ENCODE measurements at regions of chr12 and their contacts with region 1.

Region 1: DNA sequence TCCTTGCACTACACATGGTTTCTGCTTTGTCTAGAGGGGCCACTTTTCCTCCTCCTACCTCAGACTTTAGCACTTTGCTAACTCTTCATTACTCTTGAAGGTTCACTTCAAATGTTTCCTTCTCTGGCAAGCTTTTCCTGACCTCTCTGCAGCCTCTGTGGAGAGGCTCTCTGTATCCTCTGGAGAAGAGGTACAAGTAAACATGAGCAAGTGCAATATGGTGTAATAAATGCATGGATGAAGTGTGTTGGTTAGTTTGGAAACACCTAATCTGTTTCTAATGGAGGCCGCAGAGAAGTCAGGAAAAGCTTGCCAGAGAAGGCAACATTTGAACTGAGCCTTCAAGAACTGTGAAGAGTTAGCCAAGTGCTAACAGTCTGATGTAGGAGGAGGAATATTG is 329.3 kb downstream of the GRIN2B start:
- DNase-seq: no peak
- ATAC-seq: no peak

Region 2: DNA sequence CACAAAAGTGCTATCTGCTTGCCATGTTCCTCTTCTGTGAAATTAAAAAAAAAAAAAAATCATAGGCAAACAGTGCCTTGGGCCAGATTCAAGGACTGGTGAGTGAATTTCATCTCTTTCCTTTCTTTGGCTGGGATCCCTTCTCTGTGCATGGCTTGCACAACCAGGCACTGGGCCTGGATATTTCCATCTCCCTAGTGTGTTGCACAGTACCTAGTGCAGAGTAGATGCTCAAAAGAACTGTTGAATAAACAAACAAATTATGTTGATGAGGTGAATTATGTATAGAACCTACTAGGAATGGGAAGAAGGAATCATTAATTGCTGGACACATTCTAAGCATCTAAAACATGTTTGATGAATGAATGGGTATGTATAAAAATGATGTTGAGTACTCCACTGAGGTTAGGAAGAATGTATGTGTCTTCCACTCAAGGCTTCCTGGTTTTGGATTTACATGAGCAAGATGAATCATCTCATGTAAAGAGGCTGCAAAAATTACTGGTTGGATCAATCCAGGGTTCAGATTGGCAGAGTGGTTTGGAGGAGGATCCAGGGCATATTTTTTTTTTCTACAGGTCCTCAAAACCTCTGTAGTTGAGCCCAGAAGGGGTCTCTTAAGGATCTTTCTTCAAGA is 362.3 kb before region 1 on chr12:
- intact Hi-C with region 1: loop called (anchors 5 kb)
- DNase-seq: no peak
- ATAC-seq: peak; percentile 90